ENCODE measurements at regions of chr2 and their contacts with region 1.

Region 1: GRCh38 chr2:151261231-151261976 is at the start of gene RBM43:
- DNase-seq: peak; percentile 33
- ATAC-seq: peak; percentile 92
- H3K4me3 ChIP-seq: peak within 1 kb of the TSS; percentile 61 to 76
- H3K27ac ChIP-seq: peak within 1 kb of the TSS; percentile 83
- H3K4me1 ChIP-seq: peaks cover 7 to 18% of the 10 kb centered on the region in 2 experiments
- H3K27me3 ChIP-seq: no peaks in the 10 kb centered on the region
- CTCF ChIP-seq: no peak
- POLR2A ChIP-seq: no peak
- RAD21 ChIP-seq: no peak
- total RNA-seq, gene RBM43: 3.3 TPM

Region 2: GRCh38 chr2:151409601-151410484 is 148.4 kb after region 1 on chr2 and contains the start of gene RIF1:
- CTCF ChIA-PET with region 1: no interaction called
- POLR2A ChIA-PET with region 1: interaction called, 3 read pairs
- RAD21 ChIA-PET with region 1: no interaction called
- intact Hi-C with region 1: loop called (anchors 10 kb)
- DNase-seq: peak; percentile 96
- ATAC-seq: peak; percentile 94
- H3K4me3 ChIP-seq: peak within 1 kb of the TSS; percentile 82 to 91
- H3K27ac ChIP-seq: peak within 1 kb of the TSS; percentile 82
- H3K4me1 ChIP-seq: peaks cover 0 to 14% of the 10 kb centered on the region in 2 experiments; a peak in 2 of 4 replicates
- H3K27me3 ChIP-seq: no peaks in the 10 kb centered on the region
- CTCF ChIP-seq: peak; percentile 3 to 55 (median 50); a peak in 3 of 6 replicates
- POLR2A ChIP-seq: peak; percentile 75
- RAD21 ChIP-seq: no peak
- total RNA-seq, gene RIF1: 48.0 TPM